ENCODE measurements at regions of chr12 and their contacts with region 1.

Region 1: DNA sequence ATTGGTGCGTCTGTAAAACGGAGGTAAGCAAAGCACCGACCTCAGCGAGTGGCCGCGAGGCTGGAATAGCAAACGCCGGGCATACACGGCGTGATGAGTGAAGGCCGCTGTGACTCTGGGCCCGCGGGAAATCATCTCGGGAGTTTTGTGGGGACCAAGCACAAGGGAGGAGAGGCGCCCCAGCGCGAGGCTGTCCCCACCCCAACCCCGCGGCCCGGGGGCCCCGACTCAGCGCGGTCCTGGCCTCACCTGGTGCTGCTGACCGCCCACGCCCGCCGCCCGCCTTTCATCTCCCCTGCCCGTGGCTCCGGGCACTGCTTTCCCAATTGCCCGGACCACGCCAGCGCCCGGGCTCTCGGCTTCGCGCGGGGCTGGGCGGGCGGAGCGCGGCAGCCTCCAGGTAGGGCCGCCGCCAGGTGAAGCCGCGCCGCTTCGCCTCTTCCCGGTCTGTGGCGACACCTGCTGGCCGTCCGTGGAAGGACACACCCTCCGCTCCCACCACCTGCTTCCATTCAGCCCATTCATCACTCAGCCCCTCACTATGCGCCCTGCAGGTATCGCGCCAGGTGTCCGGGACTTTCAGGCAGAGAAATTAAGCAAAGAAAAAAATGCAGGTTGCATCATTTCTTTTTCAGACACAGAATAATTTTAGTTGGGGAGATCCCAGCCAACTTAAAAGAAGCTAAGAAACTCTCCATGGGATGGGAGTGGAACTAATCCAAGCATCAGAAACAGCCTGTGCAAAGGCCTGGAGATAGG is 360.4 kb downstream of the MED13L start:
- DNase-seq: peak; percentile 80
- ATAC-seq: peak; percentile 53

Region 2: DNA sequence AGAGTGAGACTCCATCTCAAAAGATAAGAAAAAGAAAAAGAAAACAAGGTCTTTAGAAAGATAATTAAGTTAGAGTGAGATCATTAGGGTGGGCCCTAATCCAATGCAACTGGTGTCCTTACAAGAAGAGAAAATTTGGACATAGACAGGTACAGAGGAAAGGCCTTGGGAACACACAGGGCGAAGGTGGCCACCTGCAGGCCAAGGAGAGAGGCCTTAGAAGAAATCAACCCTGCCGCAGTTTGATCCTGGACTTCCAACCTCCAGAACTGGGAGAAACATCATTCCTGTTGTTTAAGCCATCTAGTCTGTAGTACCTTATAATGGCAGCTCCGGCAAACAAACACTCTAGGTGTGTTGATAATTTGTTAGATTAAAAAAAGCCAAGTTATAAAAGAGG is 131.5 kb before region 1 on chr12:
- intact Hi-C with region 1: loop called (anchors 10 kb)
- DNase-seq: peak; percentile 34
- ATAC-seq: no peak

Region 3: DNA sequence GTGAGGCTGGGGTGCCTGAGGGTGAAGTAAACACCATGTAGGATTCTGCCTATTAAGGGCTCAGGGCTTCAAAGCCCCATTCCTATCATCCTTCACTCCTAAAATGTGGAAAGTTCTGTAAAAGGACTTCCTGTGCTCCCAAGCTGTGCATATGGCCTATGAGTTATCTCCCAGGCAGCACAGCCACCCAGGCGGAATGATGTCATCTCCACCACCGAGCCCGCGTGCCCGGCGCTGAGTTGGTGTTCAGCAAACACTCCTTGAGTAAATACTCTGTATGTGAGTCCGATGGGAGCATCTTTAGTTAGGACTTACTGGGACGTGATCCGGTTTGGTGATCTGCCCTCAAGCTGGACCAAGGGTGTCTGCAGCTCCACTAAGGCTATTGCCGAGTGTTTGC is 76.9 kb before region 1 on chr12:
- intact Hi-C with region 1: no loop called
- DNase-seq: no peak
- ATAC-seq: no peak

Region 4: DNA sequence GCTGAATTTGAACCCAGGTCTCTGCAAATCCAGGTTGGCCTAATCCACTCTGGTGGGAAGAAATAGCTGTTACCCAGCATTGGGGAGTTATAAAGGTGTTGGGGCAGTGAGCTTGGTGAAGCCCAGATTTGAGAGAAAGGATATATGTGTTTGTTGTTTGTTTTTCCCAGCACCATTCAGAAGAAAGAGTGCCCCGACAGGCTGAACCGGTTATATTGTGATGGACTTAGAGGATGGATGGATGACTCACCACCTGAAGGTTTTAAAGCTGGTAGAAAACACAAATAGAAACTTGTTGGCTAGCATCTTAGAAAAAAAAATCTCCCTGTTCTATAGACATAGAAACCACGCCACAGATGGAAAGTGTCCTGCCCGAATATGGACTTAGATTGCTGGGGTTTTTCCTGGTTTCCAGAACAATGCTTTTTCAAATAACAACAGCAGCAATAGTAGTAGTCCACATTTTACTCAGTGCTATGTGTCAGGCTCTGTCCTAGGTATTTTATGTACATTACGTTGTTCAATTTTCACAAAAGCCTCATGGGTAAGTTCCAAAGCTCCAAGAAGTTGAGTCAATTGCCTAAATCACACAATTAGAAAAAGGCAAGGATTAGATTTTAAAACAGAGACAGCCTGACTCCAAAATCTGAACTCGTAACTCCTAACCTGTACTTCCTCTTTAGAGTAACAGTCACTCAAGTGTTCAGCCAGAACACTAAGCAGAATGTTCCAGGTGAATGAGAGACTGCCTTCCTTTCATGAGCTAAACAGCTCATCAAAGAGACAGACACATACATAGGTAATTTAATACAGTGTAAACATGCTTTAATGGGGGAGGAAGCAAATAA is 43.9 kb before region 1 on chr12:
- intact Hi-C with region 1: no loop called
- DNase-seq: no peak
- ATAC-seq: no peak